Prostate gland (tissue), 2 donors: ENCODE measurements at regions of chr9 and their contacts with region 1.

Region 1: GRCh38 chr9:78035383-78035993 is 3.9 kb upstream of the GNAQ start:
- DNase-seq: peak; percentile 74
- H3K4me3 ChIP-seq: no peak overlapping the region
- H3K27ac ChIP-seq: no peak overlapping the region
- H3K4me1 ChIP-seq: no peaks in the 10 kb centered on the region
- H3K27me3 ChIP-seq: no peaks in the 10 kb centered on the region
- CTCF ChIP-seq: peak; percentile 72 to 93 (median 81)
- POLR2A ChIP-seq: no peak

Region 2: DNA sequence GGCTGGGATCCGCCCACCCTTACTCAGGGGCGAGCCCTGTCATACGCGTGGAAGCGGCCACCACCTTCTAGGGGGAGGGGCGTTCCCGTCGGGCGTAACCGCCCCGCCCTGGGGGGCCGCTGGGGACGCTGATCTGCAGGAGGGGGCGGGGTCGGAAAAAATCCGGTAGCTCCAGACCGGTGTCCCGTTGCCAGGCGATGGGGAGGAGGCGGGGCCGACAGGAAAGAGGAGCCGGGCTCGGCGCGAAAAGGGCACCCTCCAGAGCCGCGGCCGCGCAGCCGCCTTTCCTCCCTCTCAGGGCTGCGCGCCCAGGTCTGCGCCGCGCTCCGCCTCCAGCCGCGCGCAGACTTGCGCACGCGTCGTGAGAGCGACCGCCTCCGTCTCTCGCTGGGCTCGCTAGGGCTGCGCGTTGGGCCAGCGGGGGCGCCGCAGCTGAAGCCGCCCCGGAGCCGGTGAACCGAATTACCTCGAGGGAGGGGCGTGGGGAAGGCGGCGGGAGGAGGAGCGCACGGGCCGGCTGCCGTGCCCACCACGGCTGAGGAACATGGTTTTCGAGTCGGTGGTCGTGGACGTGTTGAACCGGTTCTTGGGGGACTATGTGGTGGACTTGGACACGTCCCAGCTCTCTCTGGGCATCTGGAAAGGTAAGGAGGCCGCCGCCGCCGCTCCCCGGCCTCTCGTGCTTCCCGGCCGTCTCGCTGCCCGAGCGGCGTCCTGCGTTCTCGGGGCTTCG is 858.2 kb before region 1 on chr9 and contains the start of gene VPS13A:
- intact Hi-C with region 1: loop called (anchors 5 kb)
- DNase-seq: peak; percentile 92
- H3K4me3 ChIP-seq: peak within 1 kb of the TSS; percentile 69 to 71
- H3K27ac ChIP-seq: peak within 1 kb of the TSS; percentile 81 to 83
- H3K4me1 ChIP-seq: no peaks in the 10 kb centered on the region
- H3K27me3 ChIP-seq: no peaks in the 10 kb centered on the region
- CTCF ChIP-seq: peak in 3 of 4 experiments; percentile 14 to 31 (median 15)
- POLR2A ChIP-seq: peak; percentile 75
- total RNA-seq, gene VPS13A: 22.7 to 25.2 TPM

Region 3: DNA sequence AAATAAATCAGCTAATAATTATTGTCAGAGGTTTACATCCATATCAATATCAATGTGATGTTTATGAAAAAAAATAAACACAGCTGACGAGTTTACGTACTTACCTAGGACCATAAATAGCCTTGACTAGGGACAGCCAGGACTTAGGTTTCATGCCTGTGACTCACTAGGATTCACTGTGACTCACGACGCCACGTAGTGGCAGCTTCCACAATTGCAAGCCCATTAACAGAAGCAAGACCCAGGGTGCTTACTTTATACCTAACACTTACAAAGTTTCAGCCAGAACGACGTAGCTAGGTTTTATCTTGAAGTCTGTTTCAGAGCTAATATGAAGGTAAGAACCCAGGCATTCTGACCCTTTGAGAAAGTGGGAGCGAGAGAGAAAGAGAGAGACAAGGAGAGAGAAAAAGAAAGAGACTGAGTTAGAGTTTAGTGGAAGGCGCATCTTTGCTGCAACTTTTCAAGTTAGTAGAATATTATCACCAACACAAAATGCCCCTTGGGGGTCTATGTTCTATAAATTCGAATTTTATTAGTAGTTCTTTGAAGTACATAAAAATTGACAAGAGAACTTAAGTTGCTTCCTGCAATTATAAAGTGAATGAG is 578.6 kb before region 1 on chr9:
- intact Hi-C with region 1: loop called (anchors 5 kb)
- DNase-seq: peak; percentile 77
- H3K4me3 ChIP-seq: no peak overlapping the region
- H3K27ac ChIP-seq: no peak overlapping the region
- H3K4me1 ChIP-seq: no peaks in the 10 kb centered on the region
- H3K27me3 ChIP-seq: no peaks in the 10 kb centered on the region
- CTCF ChIP-seq: peak; percentile 70 to 82 (median 76)
- POLR2A ChIP-seq: no peak

Region 4: GRCh38 chr9:77661566-77662085 is 373.9 kb before region 1 on chr9:
- intact Hi-C with region 1: no loop called
- DNase-seq: no peak
- H3K4me3 ChIP-seq: no peak overlapping the region
- H3K27ac ChIP-seq: no peak overlapping the region
- H3K4me1 ChIP-seq: no peaks in the 10 kb centered on the region
- H3K27me3 ChIP-seq: no peaks in the 10 kb centered on the region
- CTCF ChIP-seq: no peak
- POLR2A ChIP-seq: no peak

Region 5: DNA sequence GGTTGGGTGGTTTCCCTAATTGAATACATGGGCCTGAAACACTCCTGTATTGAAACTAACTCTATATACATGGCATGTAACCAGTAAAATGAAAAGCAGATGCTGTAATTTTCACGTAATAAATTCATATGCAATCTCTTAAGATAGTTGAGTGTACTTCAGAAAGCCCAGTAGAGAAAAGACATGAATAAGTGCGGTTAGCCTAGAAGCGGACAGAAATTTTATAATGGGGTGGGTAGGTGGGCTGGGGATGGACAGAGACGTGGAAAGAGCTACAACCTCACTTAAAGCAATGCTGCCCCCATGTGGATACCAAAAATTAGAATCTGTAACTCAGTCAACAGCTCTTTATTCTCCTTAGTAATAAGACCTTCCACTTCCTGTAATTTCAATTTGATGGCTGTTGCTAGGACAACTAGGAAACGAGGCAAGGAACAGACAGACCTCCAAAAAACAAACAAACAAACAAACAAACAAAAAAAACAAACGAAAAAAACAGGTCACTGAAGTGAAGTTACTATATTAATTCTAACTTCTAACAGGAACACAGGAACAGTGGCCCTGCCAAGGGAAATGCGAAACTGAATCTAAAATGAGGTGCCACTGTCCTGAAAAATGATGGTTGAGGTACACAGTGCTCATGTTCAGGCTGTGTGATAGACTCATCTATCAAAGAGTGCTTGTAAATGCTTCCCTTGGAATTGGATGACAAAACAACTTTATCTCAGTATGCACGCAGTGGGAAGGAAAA is 284.0 kb before region 1 on chr9:
- intact Hi-C with region 1: loop called (anchors 2 kb)
- DNase-seq: peak; percentile 64
- H3K4me3 ChIP-seq: no peak overlapping the region
- H3K27ac ChIP-seq: peak overlapping the region; percentile 6 to 14
- H3K4me1 ChIP-seq: no peaks in the 10 kb centered on the region
- H3K27me3 ChIP-seq: no peaks in the 10 kb centered on the region
- CTCF ChIP-seq: peak in 3 of 4 experiments; percentile 40 to 68 (median 59)
- POLR2A ChIP-seq: no peak

Region 6: GRCh38 chr9:77848897-77849296 is 186.6 kb before region 1 on chr9:
- intact Hi-C with region 1: loop called (anchors 5 kb)
- DNase-seq: no peak
- H3K4me3 ChIP-seq: no peak overlapping the region
- H3K27ac ChIP-seq: peak overlapping the region in 1 of 2 donors; percentile 12
- H3K4me1 ChIP-seq: peaks cover 11% of the 10 kb centered on the region
- H3K27me3 ChIP-seq: no peaks in the 10 kb centered on the region
- CTCF ChIP-seq: no peak
- POLR2A ChIP-seq: no peak

Region 7: GRCh38 chr9:77977210-77977611 is 58.3 kb before region 1 on chr9:
- intact Hi-C with region 1: loop called (anchors 5 kb)
- DNase-seq: no peak
- H3K4me3 ChIP-seq: no peak overlapping the region
- H3K27ac ChIP-seq: no peak overlapping the region
- H3K4me1 ChIP-seq: no peaks in the 10 kb centered on the region
- H3K27me3 ChIP-seq: no peaks in the 10 kb centered on the region
- CTCF ChIP-seq: peak in 1 of 4 experiments; percentile 27
- POLR2A ChIP-seq: no peak